WTC11 (cell line): ENCODE measurements at regions of chr10 and their contacts with region 1.

Region 1: DNA sequence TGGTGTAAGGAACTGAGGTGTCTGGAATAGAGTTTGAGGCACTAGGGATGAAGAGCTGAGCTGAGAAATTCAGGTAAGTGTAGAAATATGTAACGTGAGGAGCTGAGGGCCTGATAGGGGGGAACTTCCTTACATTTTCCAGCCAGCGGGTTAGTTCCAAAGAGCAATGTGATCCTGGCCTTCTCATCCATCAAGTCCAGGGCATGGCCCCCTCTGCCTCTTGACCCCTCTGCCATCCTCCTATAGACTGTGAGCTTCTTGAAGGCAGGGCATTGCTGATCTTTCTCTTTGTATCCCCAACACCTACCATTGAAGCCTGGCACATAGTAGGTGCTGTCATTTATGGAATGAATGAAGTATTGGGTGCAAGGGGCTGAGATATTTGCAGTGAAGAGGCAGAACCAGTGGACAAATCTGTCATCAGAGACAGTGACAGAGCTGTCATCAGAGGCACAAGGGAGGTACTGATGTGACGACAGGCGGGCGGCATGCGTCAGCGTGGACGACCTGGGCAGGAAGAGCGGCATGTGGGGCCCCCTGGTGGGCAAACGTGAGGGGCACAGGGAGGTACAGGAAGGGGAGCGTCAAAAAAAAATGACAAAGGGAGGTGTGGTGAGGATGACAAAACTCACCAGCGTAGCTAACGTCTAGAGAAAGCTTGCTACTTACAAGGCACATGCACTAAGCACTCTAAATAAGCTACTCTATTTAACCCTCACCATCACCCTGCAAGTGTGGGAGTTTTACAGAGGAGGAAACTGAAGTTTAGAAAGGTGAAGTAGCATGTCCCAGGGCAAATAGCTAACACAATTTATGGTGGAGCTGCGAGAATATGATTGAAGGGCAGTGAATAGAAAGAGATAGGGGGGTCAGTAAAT is 5.2 kb upstream of the CAMK2G start:
- DNase-seq: peak; percentile 81
- ATAC-seq: peak; percentile 82
- H3K4me3 Mint-ChIP-seq: no peak overlapping the region
- H3K27ac Mint-ChIP-seq: 0 out of 2 replicates have a peak overlapping the region, but pooled peaks have one; percentile 35
- H3K4me1 Mint-ChIP-seq: peaks cover 23% of the 10 kb centered on the region
- H3K27me3 Mint-ChIP-seq: no peaks in the 10 kb centered on the region; the same call in 1 of the 2 replicates
- CTCF ChIP-seq: peak; percentile 77

Region 2: DNA sequence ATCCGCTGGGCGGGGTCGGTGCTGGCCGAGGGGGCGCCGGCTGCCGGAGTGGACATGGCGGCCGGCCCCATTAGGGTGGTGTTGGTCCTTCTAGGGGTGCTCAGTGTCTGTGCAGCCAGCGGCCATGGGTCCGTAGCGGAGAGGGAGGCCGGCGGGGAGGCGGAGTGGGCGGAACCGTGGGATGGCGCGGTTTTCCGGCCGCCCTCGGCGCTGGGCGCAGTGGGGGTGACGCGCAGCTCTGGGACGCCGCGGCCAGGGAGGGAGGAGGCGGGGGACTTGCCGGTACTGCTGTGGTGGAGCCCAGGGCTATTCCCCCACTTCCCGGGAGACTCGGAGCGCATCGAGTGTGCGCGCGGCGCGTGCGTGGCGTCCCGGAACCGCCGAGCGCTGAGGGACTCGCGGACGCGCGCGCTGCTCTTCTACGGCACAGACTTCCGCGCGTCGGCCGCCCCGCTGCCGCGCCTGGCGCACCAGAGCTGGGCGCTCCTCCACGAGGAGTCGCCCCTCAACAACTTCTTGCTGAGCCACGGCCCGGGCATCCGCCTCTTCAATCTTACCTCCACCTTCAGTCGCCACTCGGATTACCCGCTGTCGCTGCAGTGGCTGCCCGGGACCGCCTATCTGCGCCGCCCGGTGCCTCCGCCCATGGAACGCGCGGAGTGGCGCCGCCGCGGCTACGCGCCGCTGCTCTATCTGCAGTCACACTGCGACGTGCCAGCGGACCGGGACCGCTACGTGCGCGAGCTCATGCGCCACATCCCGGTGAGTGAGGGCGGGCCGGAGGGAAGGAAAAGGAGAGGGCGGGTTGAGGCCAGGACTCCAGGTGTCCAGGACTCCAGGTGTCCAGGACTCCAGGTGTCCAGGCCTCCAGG is 107.0 kb before region 1 on chr10:
- CTCF ChIA-PET with region 1: interaction called, 11 read pairs
- POLR2A ChIA-PET with region 1: no interaction called
- DNase-seq: peak; percentile 67
- ATAC-seq: peak; percentile 58
- H3K4me3 Mint-ChIP-seq: peak overlapping the region; percentile 91
- H3K27ac Mint-ChIP-seq: no peak overlapping the region
- H3K4me1 Mint-ChIP-seq: peaks cover 34% of the 10 kb centered on the region
- H3K27me3 Mint-ChIP-seq: no peaks in the 10 kb centered on the region
- CTCF ChIP-seq: no peak

Region 3: GRCh38 chr10:73848821-73849489 is 30.6 kb before region 1 on chr10:
- CTCF ChIA-PET with region 1: interaction called, 75 read pairs
- POLR2A ChIA-PET with region 1: interaction called, 6 read pairs
- DNase-seq: peak; percentile 93
- ATAC-seq: peak; percentile 91
- H3K4me3 Mint-ChIP-seq: no peak overlapping the region
- H3K27ac Mint-ChIP-seq: no peak overlapping the region
- H3K4me1 Mint-ChIP-seq: peaks cover 6% of the 10 kb centered on the region
- H3K27me3 Mint-ChIP-seq: no peaks in the 10 kb centered on the region
- CTCF ChIP-seq: peak; percentile 100

Region 4: GRCh38 chr10:73865459-73866442 is 13.8 kb before region 1 on chr10:
- CTCF ChIA-PET with region 1: interaction called, 52 read pairs
- POLR2A ChIA-PET with region 1: no interaction called
- DNase-seq: no peak
- ATAC-seq: peak; percentile 31
- H3K4me3 Mint-ChIP-seq: no peak overlapping the region
- H3K27ac Mint-ChIP-seq: peak overlapping the region; percentile 49; the same call in 1 of the 2 replicates
- H3K4me1 Mint-ChIP-seq: peaks cover 22% of the 10 kb centered on the region
- H3K27me3 Mint-ChIP-seq: no peaks in the 10 kb centered on the region
- CTCF ChIP-seq: no peak

Region 5: GRCh38 chr10:73899423-73899822 is 19.9 kb after region 1 on chr10:
- CTCF ChIA-PET with region 1: interaction called, 12 read pairs
- POLR2A ChIA-PET with region 1: no interaction called
- DNase-seq: no peak
- ATAC-seq: no peak
- H3K4me3 Mint-ChIP-seq: no peak overlapping the region
- H3K27ac Mint-ChIP-seq: no peak overlapping the region
- H3K4me1 Mint-ChIP-seq: peaks cover 8% of the 10 kb centered on the region; the same call in 1 of the 2 replicates
- H3K27me3 Mint-ChIP-seq: no peaks in the 10 kb centered on the region
- CTCF ChIP-seq: no peak

Region 6: GRCh38 chr10:73956476-73957359 is 77.2 kb after region 1 on chr10:
- CTCF ChIA-PET with region 1: interaction called, 26 read pairs
- POLR2A ChIA-PET with region 1: no interaction called
- DNase-seq: no peak
- ATAC-seq: peak; percentile 43
- H3K4me3 Mint-ChIP-seq: no peak overlapping the region
- H3K27ac Mint-ChIP-seq: no peak overlapping the region; the same call in 1 of the 2 replicates
- H3K4me1 Mint-ChIP-seq: peaks cover 10% of the 10 kb centered on the region
- H3K27me3 Mint-ChIP-seq: no peaks in the 10 kb centered on the region
- CTCF ChIP-seq: no peak

Region 7: DNA sequence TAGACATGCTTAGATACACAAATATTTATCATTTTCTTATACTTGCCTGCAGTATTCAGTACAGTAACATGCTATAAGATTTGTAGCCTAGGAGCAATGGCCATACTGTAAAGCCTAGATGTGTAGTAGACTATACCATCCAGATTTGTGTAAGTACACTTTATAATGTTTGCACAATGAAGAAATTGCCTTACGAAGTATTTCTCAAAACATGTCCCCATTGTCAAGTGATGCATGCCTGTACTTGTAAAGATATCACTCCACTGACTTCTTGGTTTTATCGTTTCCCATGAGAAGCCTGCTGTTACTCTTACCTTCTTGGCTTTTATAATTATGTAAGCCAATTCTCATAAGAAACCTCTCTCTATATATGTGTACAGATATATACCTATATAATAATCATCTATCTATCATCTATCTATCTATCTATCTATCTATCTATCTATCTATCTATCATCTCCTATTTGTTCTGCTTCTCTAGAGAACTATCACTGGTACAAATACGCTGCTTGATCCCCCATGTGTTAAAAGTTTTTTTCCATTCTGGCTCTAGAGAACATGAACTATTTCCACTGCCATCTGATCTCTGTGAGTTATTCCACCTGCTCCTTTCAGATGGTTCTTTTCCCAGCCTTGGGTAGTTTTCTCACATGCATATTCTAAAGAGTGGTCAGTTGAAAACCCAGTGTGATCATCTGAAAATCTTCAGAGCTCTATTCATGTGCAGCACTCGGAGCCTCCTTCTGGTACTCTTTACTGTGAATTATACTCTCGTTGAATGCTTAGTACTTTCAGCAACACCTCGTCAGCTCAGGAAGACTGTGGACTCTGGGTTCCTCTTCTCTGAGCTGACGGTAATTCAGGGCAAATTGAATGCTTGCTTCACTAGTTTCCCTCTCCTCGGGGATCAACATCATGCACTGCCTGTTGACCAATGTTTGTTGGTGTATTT is 103.8 kb after region 1 on chr10:
- CTCF ChIA-PET with region 1: no interaction called
- POLR2A ChIA-PET with region 1: no interaction called
- DNase-seq: no peak
- ATAC-seq: peak; percentile 36; the same call in 1 of the 2 replicates
- H3K4me3 Mint-ChIP-seq: no peak overlapping the region
- H3K27ac Mint-ChIP-seq: peak overlapping the region; percentile 39; the same call in 1 of the 2 replicates
- H3K4me1 Mint-ChIP-seq: peaks cover 19% of the 10 kb centered on the region
- H3K27me3 Mint-ChIP-seq: no peaks in the 10 kb centered on the region
- CTCF ChIP-seq: no peak